OCI-LY7 (cell line): ENCODE measurements at regions of chr6 and their contacts with region 1.

Region 1: GRCh38 chr6:113842153-113842552 is 15.0 kb upstream of the MARCKS start:
- DNase-seq: no peak
- H3K4me3 ChIP-seq: no peak overlapping the region
- H3K27ac ChIP-seq: no peak overlapping the region
- H3K4me1 ChIP-seq: no peaks in the 10 kb centered on the region
- CTCF ChIP-seq: no peak

Region 2: GRCh38 chr6:113461153-113461932 is 380.8 kb before region 1 on chr6:
- CTCF ChIA-PET with region 1: no interaction called
- POLR2A ChIA-PET with region 1: interaction called, 12 read pairs
- intact Hi-C with region 1: no loop called
- DNase-seq: no peak
- H3K4me3 ChIP-seq: no peak overlapping the region
- H3K27ac ChIP-seq: no peak overlapping the region
- H3K4me1 ChIP-seq: no peaks in the 10 kb centered on the region
- CTCF ChIP-seq: peak; percentile 60

Region 3: GRCh38 chr6:113690281-113691259 is 151.6 kb before region 1 on chr6:
- CTCF ChIA-PET with region 1: no interaction called
- POLR2A ChIA-PET with region 1: no interaction called
- intact Hi-C with region 1: no loop called
- DNase-seq: no peak
- H3K4me3 ChIP-seq: no peak overlapping the region
- H3K27ac ChIP-seq: no peak overlapping the region
- H3K4me1 ChIP-seq: no peaks in the 10 kb centered on the region
- CTCF ChIP-seq: no peak